Thyroid gland (tissue), 4 donors: ENCODE measurements at regions of chr19 and their contacts with region 1.

Region 1: DNA sequence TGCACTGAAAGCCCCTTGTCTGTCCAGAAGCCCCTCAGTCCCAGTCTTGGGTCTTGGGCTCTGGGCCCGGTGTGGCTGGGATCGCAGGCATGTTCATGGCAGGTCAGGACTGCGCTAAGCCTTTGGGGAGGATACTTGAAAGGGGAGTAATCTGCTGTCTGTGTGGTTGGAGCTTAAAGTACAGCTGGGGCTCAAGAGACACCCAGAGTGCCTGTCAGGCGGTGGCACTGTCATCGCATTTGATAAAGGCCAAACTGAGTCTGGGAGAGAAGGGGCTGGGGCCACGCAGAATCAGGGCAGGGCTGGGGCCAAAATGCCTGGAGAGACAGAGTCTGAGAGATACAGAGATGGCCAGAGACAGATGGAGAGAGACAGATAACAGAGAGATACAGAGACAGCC is 4.2 kb upstream of the CILP2 start:
- DNase-seq: no peak
- H3K4me3 ChIP-seq: no peak overlapping the region
- H3K27ac ChIP-seq: no peak overlapping the region
- H3K4me1 ChIP-seq: peaks cover 12 to 18% of the 10 kb centered on the region in 2 donors
- H3K27me3 ChIP-seq: no peaks in the 10 kb centered on the region
- CTCF ChIP-seq: no peak
- POLR2A ChIP-seq: no peak

Region 2: DNA sequence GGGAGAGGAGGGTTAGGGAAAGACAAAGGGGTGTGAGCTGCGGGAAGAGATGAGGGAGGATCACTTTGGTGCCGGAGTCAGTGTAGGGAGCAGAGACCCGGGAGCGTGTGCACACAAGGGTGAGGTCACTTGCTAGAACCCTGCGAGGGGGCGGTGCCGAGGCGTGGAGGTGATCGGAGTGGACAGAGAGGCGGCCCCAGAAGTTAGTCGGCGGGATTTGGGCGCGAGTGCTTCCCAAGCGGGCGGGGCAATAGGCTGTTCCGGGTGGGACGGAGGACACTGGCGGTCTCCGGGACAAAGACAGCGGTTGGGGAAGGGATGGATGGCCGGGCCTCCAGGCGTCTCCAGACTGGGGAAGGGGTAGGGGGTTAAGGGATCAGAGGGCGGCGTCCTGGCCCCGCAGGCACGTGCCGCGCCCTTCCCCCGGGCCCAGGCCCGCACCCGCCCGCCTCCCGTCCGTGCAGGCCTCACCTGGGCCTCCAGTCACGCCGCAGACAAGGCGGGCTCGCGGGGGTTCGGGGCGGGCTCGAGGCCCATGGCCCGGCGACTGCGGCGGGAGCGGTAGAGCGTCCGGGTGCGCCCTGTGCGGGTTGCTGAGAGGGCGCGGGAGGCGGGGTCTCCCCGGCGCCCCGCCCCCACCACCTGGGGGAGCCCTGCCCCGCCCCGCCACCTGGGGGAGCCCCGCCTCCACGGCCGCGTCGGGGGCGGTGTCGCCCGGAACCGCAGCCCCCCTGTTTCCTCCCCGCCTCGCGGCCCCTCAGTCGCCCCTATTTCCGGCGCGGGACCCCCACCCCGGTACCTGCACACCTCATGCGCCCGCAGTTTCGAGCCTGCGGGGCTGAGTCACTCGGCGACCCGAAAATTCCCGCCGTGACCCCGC is 94.0 kb after region 1 on chr19 and contains the start of gene LPAR2:
- intact Hi-C with region 1: no loop called
- DNase-seq: peak; percentile 72 to 75
- H3K4me3 ChIP-seq: peak within 1 kb of the TSS; percentile 32 to 66 (median 53)
- H3K27ac ChIP-seq: peak within 1 kb of the TSS; percentile 53 to 86 (median 68)
- H3K4me1 ChIP-seq: peaks cover 0 to 20% of the 10 kb centered on the region in 2 donors
- H3K27me3 ChIP-seq: no peaks in the 10 kb centered on the region
- CTCF ChIP-seq: no peak
- POLR2A ChIP-seq: peak in 1 of 2 donors; percentile 55
- total RNA-seq, gene LPAR2: 10.2 to 35.2 (median 22.9) TPM

Region 3: DNA sequence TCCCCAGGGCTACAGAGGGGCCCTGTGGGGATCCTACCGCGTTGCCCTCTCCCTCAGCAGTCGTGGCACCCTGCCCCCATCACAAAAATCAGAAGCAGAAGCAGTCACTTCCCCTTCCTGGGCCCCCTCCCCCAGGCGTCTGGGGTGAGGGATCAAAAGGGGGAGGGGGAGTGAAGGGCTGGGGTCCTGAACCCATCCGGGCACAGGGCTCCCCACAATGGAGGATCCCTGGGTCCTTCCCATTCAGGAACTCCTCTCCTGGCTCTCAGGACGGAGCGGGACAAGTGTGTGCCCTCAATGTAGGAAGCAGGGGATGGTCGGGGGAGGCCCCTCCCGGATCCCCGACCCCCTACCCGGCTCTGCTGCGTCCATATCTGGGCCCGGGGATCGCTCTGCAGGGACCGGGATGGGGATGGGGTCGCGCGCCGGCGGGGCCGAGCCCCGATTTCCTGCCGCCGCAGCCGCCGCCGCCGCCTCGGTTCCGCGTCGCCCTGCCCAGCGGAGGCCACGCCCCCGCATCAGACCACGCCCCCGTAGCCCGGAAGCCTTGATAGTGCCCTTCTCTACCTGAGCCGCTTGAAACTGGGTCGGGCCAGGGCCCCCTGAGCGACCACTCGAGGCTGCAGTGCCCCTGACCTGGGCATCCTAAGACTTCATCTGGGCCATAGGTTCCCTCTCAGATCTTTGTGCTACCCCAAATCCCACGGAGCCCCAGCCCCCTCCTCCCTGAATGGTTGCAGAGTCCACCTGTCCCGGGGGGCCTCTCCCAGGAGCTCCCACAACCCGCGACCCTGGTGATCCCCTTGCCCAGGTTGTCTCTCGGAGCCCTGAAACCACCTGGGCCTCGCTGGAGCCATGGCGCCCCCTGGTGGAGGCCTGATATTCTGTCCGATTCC is 109.6 kb after region 1 on chr19 and contains the start of gene GMIP:
- intact Hi-C with region 1: loop called (anchors 2 kb)
- DNase-seq: peak; percentile 78 to 82
- H3K4me3 ChIP-seq: peak within 1 kb of the TSS; percentile 33 to 63 (median 52)
- H3K27ac ChIP-seq: peak within 1 kb of the TSS in 2 of 3 donors; percentile 27 to 32
- H3K4me1 ChIP-seq: peaks cover 8 to 14% of the 10 kb centered on the region in 2 donors
- H3K27me3 ChIP-seq: no peaks in the 10 kb centered on the region
- CTCF ChIP-seq: peak; percentile 87 to 92 (median 90)
- POLR2A ChIP-seq: peak in 1 of 2 donors; percentile 60
- total RNA-seq, gene GMIP: 12.9 to 23.5 (median 17.3) TPM